Ovary (tissue), 10 donors: ENCODE measurements at regions of chr1 and their contacts with region 1.

Region 1: GRCh38 chr1:243482141-243483022 is 226.5 kb downstream of the SDCCAG8 start:
- DNase-seq: peak in 1 of 5 donors; percentile 60
- H3K4me3 ChIP-seq: peak overlapping the region; percentile 15
- H3K27ac ChIP-seq: peak overlapping the region in 1 of 2 donors; percentile 5
- H3K4me1 ChIP-seq: peaks cover 7% of the 10 kb centered on the region
- H3K27me3 ChIP-seq: no peaks in the 10 kb centered on the region
- CTCF ChIP-seq: no peak
- EP300 ChIP-seq: no peak
- POLR2A ChIP-seq: no peak

Region 2: DNA sequence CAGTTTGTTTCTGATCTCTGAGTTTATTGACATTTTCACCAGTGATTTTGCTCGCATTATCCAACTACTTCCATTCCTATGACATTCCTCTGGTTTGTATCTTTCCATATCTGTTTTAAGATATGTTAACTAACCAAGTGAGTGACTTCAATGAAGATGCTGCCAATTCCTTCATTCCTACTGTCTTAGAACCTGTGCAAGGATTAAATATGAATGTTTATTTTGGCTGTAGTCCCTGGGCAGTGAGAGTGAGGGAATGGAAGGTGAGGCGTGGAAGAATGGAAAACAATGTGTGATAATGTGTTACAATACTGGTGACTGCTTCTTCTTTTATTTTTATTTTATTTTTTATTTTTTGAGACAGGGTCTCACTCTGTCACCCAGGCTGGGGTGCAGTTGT is 43.6 kb before region 1 on chr1:
- intact Hi-C with region 1: loop called in 1 of 4 experiments (anchors 1 kb)
- DNase-seq: no peak
- H3K4me3 ChIP-seq: no peak overlapping the region
- H3K27ac ChIP-seq: no peak overlapping the region
- H3K4me1 ChIP-seq: peaks cover 4% of the 10 kb centered on the region
- H3K27me3 ChIP-seq: no peaks in the 10 kb centered on the region
- CTCF ChIP-seq: no peak
- EP300 ChIP-seq: no peak
- POLR2A ChIP-seq: no peak

Region 3: GRCh38 chr1:243542739-243543415 is 60.5 kb after region 1 on chr1:
- intact Hi-C with region 1: no loop called
- DNase-seq: no peak
- H3K4me3 ChIP-seq: no peak overlapping the region
- H3K27ac ChIP-seq: no peak overlapping the region
- H3K4me1 ChIP-seq: no peaks in the 10 kb centered on the region
- H3K27me3 ChIP-seq: no peaks in the 10 kb centered on the region
- CTCF ChIP-seq: no peak
- EP300 ChIP-seq: no peak
- POLR2A ChIP-seq: no peak

Region 4: DNA sequence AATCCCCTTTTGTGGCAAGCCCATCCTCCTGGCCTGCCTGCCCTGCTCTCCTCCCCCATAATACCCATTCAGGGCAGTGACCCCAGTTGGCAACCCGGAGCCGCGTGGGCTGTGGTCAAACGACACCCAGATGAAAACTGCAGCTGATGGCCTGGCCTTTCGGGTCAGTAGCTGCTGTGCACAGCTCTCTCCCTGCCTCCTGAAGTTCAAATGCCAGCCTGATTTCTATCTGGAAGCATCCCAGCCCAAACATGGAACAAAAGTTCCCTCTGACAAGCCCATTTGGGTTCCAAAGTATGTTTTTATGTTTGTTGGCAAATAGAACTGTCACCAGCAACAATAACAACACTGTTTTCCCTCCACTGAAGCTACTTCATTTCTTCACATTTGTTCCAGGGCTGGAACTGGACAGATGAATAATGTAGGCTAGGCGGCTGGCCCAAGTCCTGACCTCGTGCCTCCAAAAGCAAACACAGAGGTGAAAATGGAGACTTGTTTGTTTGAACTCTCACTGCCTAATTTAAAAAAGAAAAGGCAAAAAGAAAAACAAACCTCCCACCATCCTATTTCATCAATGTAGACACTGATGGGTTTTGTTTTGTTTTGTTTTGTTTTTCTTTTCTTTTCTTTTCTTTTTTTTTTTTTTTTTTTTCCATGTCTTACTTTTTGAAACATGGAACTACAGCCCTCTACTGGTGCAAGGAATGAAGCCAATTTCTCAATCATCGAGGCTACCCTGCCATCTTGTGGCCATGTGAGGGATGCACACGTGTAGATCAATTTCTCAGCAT is 790.3 kb after region 1 on chr1:
- intact Hi-C with region 1: loop called in 1 of 4 experiments (anchors 10 kb)
- DNase-seq: peak; percentile 42 to 80 (median 78)
- H3K4me3 ChIP-seq: no peak overlapping the region
- H3K27ac ChIP-seq: peak overlapping the region; percentile 5 to 65
- H3K4me1 ChIP-seq: peaks cover 2% of the 10 kb centered on the region
- H3K27me3 ChIP-seq: no peaks in the 10 kb centered on the region
- CTCF ChIP-seq: peak; percentile 54 to 94 (median 91)
- EP300 ChIP-seq: no peak
- POLR2A ChIP-seq: no peak